ENCODE measurements at regions of chr16 and their contacts with region 1.

Region 1: DNA sequence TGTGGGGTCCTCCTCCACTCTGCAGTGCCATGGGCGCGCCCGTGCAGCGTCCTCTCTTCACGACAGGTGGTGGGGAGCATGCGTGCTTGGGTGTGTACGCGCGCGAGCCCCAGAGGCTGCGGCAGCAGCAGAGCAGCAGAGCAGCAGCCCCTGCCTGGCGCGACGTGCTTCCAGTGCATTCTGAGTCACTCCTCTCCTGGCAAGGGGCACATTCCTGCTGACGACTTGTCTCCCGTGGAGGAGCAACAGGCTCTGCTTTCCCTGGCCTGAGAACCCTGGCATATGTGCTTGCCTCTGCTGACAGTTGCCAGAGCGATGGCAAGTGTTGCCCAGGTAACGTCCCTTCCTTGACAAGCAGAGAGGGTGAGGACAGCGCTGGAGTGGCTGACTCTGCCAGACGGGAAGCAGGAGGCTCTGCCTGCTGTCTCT is 133.8 kb upstream of the PLCG2 start:
- DNase-seq: peak; percentile 96
- H3K4me3 ChIP-seq: peak overlapping the region in 3 of 4 donors; percentile 14 to 19 (median 15)
- H3K27ac ChIP-seq: peak overlapping the region; percentile 71 to 86 (median 77)
- H3K4me1 ChIP-seq: peaks cover 0 to 44% (median 17%) of the 10 kb centered on the region in 4 donors
- H3K27me3 ChIP-seq: no peaks in the 10 kb centered on the region
- CTCF ChIP-seq: no peak
- EP300 ChIP-seq: peak in 3 of 4 donors; percentile 50 to 90 (median 90)
- POLR2A ChIP-seq: no peak

Region 2: GRCh38 chr16:81610144-81610842 is 35.0 kb before region 1 on chr16:
- intact Hi-C with region 1: no loop called
- DNase-seq: peak; percentile 88
- H3K4me3 ChIP-seq: peak overlapping the region in 2 of 4 donors; percentile 10 to 11
- H3K27ac ChIP-seq: peak overlapping the region in 3 of 4 donors; percentile 39 to 58 (median 51)
- H3K4me1 ChIP-seq: peaks cover 0 to 47% (median 33%) of the 10 kb centered on the region in 4 donors
- H3K27me3 ChIP-seq: no peaks in the 10 kb centered on the region
- CTCF ChIP-seq: no peak
- EP300 ChIP-seq: no peak
- POLR2A ChIP-seq: no peak

Region 3: GRCh38 chr16:81711657-81712319 is 66.5 kb after region 1 on chr16:
- intact Hi-C with region 1: loop called (anchors 5 kb)
- DNase-seq: peak; percentile 81
- H3K4me3 ChIP-seq: no peak overlapping the region
- H3K27ac ChIP-seq: peak overlapping the region in 3 of 4 donors; percentile 65 to 75 (median 73)
- H3K4me1 ChIP-seq: peaks cover 2 to 66% (median 55%) of the 10 kb centered on the region in 4 donors
- H3K27me3 ChIP-seq: no peaks in the 10 kb centered on the region
- CTCF ChIP-seq: no peak
- EP300 ChIP-seq: peak in 2 of 4 donors; percentile 73 to 88
- POLR2A ChIP-seq: no peak

Measured in sigmoid colon (tissue), 7 donors.